Left cardiac atrium (tissue), 4 donors: ENCODE measurements at regions of chr14 and their contacts with region 1.

Region 1: GRCh38 chr14:50396631-50397390 is at the start of gene CDKL1:
- DNase-seq: peak; percentile 68
- ATAC-seq: peak; percentile 94 to 96
- total RNA-seq, gene CDKL1: 2.9 to 3.0 TPM

Region 2: GRCh38 chr14:50272503-50272902 is 124.3 kb before region 1 on chr14:
- intact Hi-C with region 1: no loop called
- DNase-seq: no peak
- ATAC-seq: no peak

Region 3: DNA sequence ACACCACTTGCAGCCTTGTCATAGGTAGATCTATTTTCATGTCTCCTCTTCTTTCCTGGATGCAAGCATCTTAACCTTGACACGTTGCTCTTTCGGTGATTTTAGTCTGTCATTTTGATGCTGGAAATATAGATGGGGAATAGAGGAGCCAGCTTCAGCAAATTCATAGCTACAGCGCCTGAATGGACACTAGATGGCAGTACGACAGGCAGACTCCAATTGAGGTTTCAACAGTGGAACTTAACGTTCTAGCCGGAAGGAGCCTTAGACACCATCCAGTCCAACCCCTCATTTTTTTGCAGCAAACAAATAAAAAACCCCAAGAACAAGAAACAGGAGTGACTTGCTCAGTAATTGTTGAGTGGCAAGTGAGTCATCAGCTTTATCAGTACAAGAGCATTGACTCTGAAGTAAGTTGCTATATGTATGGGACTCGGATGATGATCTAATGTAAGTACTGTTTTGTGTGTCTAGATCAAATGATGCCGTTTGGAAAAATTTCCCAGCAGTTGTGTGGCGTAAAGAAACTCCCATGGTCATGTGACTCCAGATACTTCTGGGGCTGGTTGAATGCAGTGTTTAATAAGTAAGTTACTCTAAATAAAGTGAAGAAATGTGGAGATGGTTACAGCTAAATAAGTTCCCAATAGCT is 75.7 kb before region 1 on chr14:
- intact Hi-C with region 1: loop called in 1 of 2 experiments (anchors 1 kb)
- DNase-seq: peak; percentile 50
- ATAC-seq: peak; percentile 95 to 96

Region 4: DNA sequence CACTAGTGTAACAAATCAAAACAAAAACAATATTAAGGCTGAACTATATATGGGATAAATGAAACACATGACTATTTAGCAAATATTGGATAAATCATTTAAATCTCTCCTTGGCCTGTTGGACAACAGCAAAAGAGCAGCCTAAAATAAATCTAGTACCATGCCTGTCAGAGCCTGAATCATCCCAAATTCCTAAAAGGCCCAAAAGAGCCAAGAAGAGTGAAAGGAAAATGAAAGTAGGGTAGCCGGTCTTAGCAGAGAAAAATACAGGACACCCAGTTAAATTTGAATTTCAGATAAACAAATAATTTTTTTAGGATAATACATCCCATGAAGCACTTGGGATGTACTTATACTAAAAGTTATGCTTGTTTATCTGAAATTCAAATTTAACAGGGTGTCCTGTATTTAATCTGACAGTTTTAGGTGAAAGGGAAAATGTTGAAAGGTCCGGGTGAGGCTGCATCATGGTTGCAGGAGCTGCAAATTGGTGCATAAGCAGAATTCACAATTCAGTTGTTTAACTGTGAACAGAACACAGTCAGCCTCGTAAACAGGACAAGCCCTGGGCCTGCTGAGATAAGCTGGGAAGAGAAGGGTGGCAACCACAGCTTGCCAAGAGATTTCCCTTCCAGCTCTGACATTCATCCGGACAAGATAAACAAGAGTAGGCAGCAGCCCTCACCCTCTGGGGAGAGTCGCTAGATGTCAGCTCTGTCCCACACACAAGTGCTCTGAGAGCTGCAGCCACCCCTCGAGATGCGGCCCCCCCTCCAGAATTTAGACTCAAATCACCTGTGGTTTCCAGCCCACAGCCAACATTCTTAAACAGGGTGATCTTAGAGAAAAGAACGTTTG is 54.4 kb before region 1 on chr14:
- intact Hi-C with region 1: no loop called
- DNase-seq: peak; percentile 51
- ATAC-seq: peak; percentile 92 to 95